B cell (primary cell): ENCODE measurements at regions of chr1 and their contacts with region 1.

Region 1: GRCh38 chr1:51605961-51606723 is 10.8 kb upstream of the OSBPL9 start:
- DNase-seq: no peak
- ATAC-seq: no peak
- H3K4me3 ChIP-seq: no peak overlapping the region
- H3K4me3 Mint-ChIP-seq: no peak overlapping the region
- H3K27ac ChIP-seq: no peak overlapping the region
- H3K27ac Mint-ChIP-seq: no peak overlapping the region
- H3K4me1 ChIP-seq: no peaks in the 10 kb centered on the region
- H3K4me1 Mint-ChIP-seq: no peaks in the 10 kb centered on the region
- H3K27me3 ChIP-seq: peaks cover 0 to 3% (median 0%) of the 10 kb centered on the region in 4 experiments
- H3K27me3 Mint-ChIP-seq: peaks cover under 1% of the 10 kb centered on the region
- CTCF ChIP-seq: no peak

Region 2: GRCh38 chr1:51592711-51593110 is 13.4 kb before region 1 on chr1:
- CTCF ChIA-PET with region 1: no interaction called
- POLR2A ChIA-PET with region 1: no interaction called
- intact Hi-C with region 1: loop called (anchors 1 kb)
- DNase-seq: no peak
- ATAC-seq: no peak
- H3K4me3 ChIP-seq: no peak overlapping the region
- H3K4me3 Mint-ChIP-seq: no peak overlapping the region
- H3K27ac ChIP-seq: no peak overlapping the region
- H3K27ac Mint-ChIP-seq: no peak overlapping the region
- H3K4me1 ChIP-seq: no peaks in the 10 kb centered on the region
- H3K4me1 Mint-ChIP-seq: no peaks in the 10 kb centered on the region
- H3K27me3 ChIP-seq: no peaks in the 10 kb centered on the region
- H3K27me3 Mint-ChIP-seq: no peaks in the 10 kb centered on the region
- CTCF ChIP-seq: no peak